Activated CD8-positive, alpha-beta T cell treated with anti-CD3 and anti-CD28 coated beads, Interleukin-2, amount 10 ng/mL, durations not matched to agents 7 days and 5 days (primary cell): ENCODE measurements at regions of chr17 and their contacts with region 1.

Region 1: GRCh38 chr17:66567234-66568170 is 265.1 kb downstream of the PRKCA start:
- DNase-seq: peak; percentile 81
- ATAC-seq: peak; percentile 80
- H3K4me3 Mint-ChIP-seq: no peak overlapping the region
- H3K27ac Mint-ChIP-seq: peak overlapping the region; percentile 9
- H3K4me1 Mint-ChIP-seq: peaks cover 15% of the 10 kb centered on the region
- H3K27me3 Mint-ChIP-seq: no peaks in the 10 kb centered on the region

Region 2: GRCh38 chr17:66255112-66255511 is 312.4 kb before region 1 on chr17:
- CTCF ChIA-PET with region 1: interaction called, 50 read pairs
- POLR2A ChIA-PET with region 1: no interaction called
- DNase-seq: peak; percentile 67
- ATAC-seq: peak; percentile 86
- H3K4me3 Mint-ChIP-seq: no peak overlapping the region
- H3K27ac Mint-ChIP-seq: peak overlapping the region; percentile 31
- H3K4me1 Mint-ChIP-seq: peaks cover 18% of the 10 kb centered on the region
- H3K27me3 Mint-ChIP-seq: no peaks in the 10 kb centered on the region

Region 3: DNA sequence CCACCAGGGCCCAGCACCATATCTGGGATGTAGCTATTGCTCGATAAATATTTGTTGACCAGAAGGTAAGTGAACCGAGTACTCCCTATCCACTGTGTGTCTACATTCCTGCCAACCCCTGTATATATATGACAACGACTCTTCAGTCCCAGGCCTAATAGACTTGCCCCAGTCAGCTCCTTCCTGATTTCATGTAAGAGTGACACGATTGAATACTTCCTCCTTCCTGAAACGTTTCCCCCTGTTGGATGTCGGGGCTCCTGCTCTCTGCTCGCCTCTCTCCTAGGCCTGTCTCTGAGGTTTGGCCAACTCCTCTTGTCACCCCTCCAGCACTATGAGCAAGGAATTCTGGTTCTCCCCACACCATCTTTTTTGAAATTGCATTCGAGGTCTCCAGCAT is 86.2 kb before region 1 on chr17:
- CTCF ChIA-PET with region 1: no interaction called
- POLR2A ChIA-PET with region 1: no interaction called
- DNase-seq: no peak
- ATAC-seq: no peak
- H3K4me3 Mint-ChIP-seq: no peak overlapping the region
- H3K27ac Mint-ChIP-seq: no peak overlapping the region
- H3K4me1 Mint-ChIP-seq: peaks cover 3% of the 10 kb centered on the region
- H3K27me3 Mint-ChIP-seq: no peaks in the 10 kb centered on the region

Region 4: GRCh38 chr17:66548158-66548557 is 19.3 kb before region 1 on chr17:
- CTCF ChIA-PET with region 1: interaction called, 18 read pairs
- POLR2A ChIA-PET with region 1: no interaction called
- DNase-seq: peak; percentile 68
- ATAC-seq: peak; percentile 74
- H3K4me3 Mint-ChIP-seq: peak overlapping the region; percentile 33
- H3K27ac Mint-ChIP-seq: peak overlapping the region; percentile 84
- H3K4me1 Mint-ChIP-seq: peaks cover 52% of the 10 kb centered on the region
- H3K27me3 Mint-ChIP-seq: no peaks in the 10 kb centered on the region